ENCODE measurements at regions of chr2 and their contacts with region 1.

Region 1: GRCh38 chr2:37231241-37232130 is at the starts of genes CEBPZ and NDUFAF7:
- DNase-seq: peak; percentile 92 to 95
- ATAC-seq: peak; percentile 96 to 98 (median 98)
- H3K4me3 ChIP-seq: peak within 1 kb of the TSS; percentile 84
- H3K27ac ChIP-seq: peak within 1 kb of the TSS; percentile 91
- H3K4me1 ChIP-seq: peaks cover 27% of the 10 kb centered on the region
- H3K27me3 ChIP-seq: no peaks in the 10 kb centered on the region
- CTCF ChIP-seq: no peak
- total RNA-seq, gene CEBPZ: 31.7 to 76.6 (median 64.9) TPM
- total RNA-seq, gene NDUFAF7: 20.8 to 31.1 (median 23.3) TPM

Region 2: DNA sequence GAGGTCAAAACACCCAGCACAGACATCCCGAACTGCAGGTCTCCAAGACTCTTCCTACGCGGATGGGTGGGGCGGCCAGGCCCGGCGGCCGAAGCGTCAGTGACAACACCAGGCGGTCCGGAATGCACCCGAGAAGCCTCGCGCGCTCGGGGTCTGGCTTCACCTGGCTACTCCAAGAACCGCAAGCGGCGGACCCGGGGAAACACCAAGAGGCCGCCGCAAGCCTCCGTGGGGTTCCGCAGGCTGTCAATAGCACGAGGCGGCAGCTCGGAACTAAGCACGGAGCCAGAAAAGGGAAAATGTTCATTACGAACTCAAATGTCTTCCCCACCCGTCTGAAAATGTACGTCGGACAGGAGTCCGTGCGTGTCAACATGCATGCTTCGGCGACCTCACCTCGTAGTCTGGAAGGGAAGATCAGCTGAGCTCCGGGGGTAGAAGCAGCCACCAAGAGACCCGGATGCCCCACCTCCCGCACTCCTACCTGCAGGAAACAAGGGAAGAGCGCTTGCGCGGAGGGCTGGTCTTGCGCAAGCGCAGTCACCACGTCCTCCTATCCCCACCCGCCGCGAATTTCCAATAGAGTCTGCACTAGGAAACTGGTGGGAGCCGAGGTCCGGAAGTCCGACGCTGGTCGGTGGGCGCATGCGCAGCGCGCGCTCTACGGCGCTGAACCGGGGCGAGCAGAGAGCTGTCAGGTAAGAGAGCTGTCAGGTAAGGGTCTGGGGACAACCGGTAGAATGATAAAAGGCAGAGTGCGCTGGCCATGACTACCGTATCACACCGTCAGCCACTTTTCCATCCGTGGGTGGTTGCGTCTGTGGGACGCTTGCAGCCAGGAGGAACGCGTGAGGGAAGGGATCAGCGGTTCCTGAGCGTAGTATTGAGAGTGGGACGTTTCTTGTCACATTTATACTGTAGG is 147.4 kb before region 1 on chr2 and contains the starts of genes GPATCH11 and HEATR5B:
- intact Hi-C with region 1: loop called in 1 of 2 experiments (anchors 5 kb)
- DNase-seq: peak; percentile 91 to 95
- ATAC-seq: peak; percentile 98 to 100 (median 99)
- H3K4me3 ChIP-seq: peak within 1 kb of the TSS; percentile 90
- H3K27ac ChIP-seq: peak within 1 kb of the TSS; percentile 87
- H3K4me1 ChIP-seq: peaks cover 17% of the 10 kb centered on the region
- H3K27me3 ChIP-seq: no peaks in the 10 kb centered on the region
- CTCF ChIP-seq: no peak
- total RNA-seq, gene GPATCH11: 2.0 to 4.7 (median 4.0) TPM
- total RNA-seq, gene HEATR5B: 5.4 to 6.9 (median 6.1) TPM

Region 3: DNA sequence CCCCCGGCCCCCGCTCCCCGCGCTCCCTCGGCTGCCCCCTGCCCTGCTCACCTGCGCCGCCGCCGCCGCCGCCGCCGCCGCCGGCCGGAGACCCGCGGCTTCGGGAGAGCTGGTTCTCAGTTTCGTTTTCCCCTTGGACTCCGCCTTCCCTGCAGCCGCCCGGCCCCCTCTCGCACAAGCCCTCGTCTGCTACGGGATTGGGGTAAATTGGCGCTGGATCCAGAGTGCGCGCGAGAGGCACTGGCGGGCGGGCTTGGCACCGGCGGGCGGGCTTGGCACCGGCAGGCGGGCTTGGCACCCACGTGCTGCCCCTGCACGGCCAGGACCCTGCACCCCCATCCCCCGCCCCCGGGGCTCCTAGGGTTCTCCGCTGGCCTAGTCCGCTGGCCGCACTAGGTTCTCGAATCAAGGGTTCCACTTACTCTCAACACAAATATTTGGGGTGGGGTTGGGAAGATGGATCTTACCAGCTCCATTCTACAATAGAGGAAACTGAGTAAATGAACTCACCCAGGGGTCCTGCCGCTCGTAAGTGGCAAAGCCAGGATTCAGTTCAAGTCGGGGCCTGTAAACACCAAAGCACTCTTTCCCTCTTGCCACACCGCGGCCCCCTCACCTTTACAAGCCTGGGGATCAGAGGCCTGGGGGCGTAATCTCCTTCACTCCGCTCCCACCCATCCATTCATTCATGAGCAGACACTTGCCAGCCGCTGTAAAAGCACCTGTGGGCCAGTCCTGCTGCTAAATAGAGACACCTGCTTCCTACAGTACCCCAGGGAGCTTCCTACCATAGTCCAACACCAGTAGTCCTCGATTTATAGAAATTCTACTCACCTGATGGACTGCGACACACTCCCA is 74.4 kb before region 1 on chr2 and contains the start of gene EIF2AK2:
- intact Hi-C with region 1: loop called in 1 of 2 experiments (anchors 5 kb)
- DNase-seq: peak; percentile 85 to 89
- ATAC-seq: peak; percentile 85 to 89 (median 88)
- H3K4me3 ChIP-seq: peak within 1 kb of the TSS; percentile 90
- H3K27ac ChIP-seq: peak within 1 kb of the TSS; percentile 76
- H3K4me1 ChIP-seq: peaks cover 8% of the 10 kb centered on the region
- H3K27me3 ChIP-seq: no peaks in the 10 kb centered on the region
- CTCF ChIP-seq: no peak
- total RNA-seq, gene EIF2AK2: 6.7 to 16.6 (median 11.0) TPM